Prostate gland (tissue), 2 donors: ENCODE measurements at regions of chr12 and their contacts with region 1.

Region 1: DNA sequence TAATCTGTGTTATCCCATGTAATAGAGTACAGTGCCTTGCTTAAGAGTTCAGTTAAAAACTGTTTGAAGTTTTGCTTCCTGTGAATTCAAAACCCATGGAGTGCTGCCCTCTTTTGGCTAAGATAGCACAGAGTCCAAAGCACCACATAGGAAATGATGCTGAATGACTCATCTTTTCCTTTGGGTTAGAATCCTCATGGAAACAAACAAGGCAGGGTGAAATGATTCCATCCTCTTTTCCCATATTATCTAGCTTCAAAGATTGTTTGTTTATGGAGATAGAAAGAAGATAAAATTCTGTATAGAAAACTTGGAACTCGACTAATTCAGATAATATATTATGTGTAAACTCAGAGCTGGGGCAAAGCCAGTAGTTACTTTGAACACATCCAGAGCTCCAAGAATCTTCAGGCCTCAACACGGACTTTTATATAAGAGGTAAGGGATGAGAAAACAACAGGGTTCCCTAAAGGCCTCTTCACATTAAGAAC is 87.4 kb downstream of the OTOGL start:
- DNase-seq: peak; percentile 65
- H3K4me3 ChIP-seq: no peak overlapping the region
- H3K27ac ChIP-seq: peak overlapping the region; percentile 65 to 71
- H3K4me1 ChIP-seq: no peaks in the 10 kb centered on the region
- H3K27me3 ChIP-seq: no peaks in the 10 kb centered on the region
- CTCF ChIP-seq: peak; percentile 26 to 80 (median 71)
- POLR2A ChIP-seq: no peak

Region 2: DNA sequence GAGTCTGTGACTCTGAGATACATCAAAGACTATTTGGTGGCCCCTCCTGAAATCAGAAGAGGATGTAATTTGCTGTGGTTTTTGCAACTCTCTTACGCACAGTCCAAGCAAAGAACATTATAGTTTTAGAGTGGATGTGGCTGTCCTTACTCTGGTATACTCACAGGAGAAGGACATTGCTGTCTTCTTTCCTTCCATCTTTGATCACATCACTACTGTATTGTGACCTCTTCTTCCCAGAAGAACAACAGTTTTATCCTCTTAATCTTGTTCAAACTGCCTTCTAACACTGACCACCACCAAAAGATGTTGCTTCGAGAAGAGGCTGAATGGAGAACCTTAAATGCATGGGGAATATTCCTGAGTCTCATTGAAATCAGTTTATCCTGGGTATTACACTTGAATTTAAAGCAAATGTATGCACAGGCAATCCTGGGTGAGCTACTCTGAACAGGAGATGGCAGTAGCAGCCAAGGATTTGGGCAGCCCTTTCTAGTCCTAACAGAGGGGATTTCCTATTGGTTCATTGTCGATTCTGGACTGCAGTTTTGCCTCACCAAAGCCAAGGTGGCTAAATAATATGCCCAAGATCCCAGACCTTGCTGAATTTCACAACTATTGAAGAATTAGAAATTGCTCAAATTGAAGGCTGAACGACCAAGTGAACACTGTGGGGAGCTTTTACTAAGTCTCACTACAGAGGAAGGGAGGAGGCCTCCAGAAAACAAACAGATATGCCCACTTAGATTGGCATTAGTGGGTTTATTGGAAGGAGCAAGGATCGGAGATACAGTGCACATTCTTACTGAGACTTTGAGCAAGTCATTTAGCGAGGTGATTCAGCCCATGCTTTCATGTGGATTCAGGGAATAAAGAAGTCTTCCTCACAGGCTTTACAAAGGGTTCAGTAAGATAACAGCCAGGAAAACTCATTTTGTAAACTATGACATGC is 778.8 kb before region 1 on chr12:
- intact Hi-C with region 1: loop called (anchors 5 kb)
- DNase-seq: peak; percentile 53
- H3K4me3 ChIP-seq: no peak overlapping the region
- H3K27ac ChIP-seq: peak overlapping the region in 1 of 2 donors; percentile 20
- H3K4me1 ChIP-seq: no peaks in the 10 kb centered on the region
- H3K27me3 ChIP-seq: no peaks in the 10 kb centered on the region
- CTCF ChIP-seq: peak; percentile 20 to 78 (median 63)
- POLR2A ChIP-seq: no peak

Region 3: DNA sequence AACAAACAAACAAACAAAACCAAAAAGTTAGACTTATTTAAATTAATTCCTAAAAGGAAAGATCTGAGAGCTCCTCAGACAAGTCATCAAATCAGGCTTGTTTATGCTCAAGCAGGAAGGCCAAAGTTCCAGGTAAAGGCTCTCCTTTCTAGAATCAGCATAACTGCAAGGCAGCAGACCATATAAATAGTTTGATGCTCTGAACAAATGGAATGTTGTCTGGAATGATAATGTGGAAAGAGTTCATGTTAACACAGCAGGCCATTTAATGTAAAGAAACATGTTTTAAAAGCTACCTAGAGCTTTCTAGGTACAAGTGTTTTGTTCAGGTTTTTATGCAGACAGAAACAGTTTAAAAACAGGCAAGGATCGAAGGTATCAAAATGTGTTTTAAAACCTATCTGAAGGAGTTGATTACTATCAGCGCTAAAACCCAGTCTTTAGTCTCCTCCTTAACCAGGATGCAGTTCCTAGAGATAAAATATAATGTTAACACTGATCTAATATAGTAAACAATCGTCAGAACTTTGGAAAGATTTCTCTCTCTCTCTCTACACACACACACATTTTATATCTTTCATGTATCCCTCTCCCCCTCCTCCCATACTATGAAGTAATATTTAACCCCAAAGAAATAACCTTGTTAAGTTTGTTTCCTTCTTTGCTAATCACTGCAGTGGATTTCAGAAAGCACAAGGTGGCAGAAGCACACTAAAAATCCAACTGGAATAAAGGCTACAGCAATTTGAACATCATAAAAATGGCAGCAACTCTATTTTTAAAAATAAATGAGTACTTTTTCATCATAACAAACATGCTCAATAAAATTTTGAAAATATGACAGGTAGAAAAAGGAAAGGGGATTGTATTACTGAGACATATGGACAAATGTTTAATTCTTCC is 631.5 kb before region 1 on chr12:
- intact Hi-C with region 1: loop called (anchors 5 kb)
- DNase-seq: no peak
- H3K4me3 ChIP-seq: no peak overlapping the region
- H3K27ac ChIP-seq: peak overlapping the region; percentile 82 to 83
- H3K4me1 ChIP-seq: peaks cover 3% of the 10 kb centered on the region
- H3K27me3 ChIP-seq: no peaks in the 10 kb centered on the region
- CTCF ChIP-seq: peak; percentile 40 to 94 (median 66)
- POLR2A ChIP-seq: no peak

Region 4: GRCh38 chr12:79690638-79691493 is 495.9 kb before region 1 on chr12 and contains the start of gene PAWR:
- intact Hi-C with region 1: loop called (anchors 10 kb)
- DNase-seq: peak; percentile 80
- H3K4me3 ChIP-seq: peak within 1 kb of the TSS; percentile 82 to 94
- H3K27ac ChIP-seq: peak within 1 kb of the TSS; percentile 94
- H3K4me1 ChIP-seq: no peaks in the 10 kb centered on the region
- H3K27me3 ChIP-seq: no peaks in the 10 kb centered on the region
- CTCF ChIP-seq: peak in 2 of 4 experiments; percentile 28 to 52
- POLR2A ChIP-seq: peak; percentile 18
- total RNA-seq, gene PAWR: 46.4 to 58.7 TPM

Region 5: GRCh38 chr12:79935021-79935623 is 251.7 kb before region 1 on chr12 and contains the start of gene PPP1R12A:
- intact Hi-C with region 1: loop called (anchors 2 kb)
- DNase-seq: peak; percentile 94
- H3K4me3 ChIP-seq: peak within 1 kb of the TSS; percentile 92 to 94
- H3K27ac ChIP-seq: peak within 1 kb of the TSS; percentile 94 to 96
- H3K4me1 ChIP-seq: no peaks in the 10 kb centered on the region
- H3K27me3 ChIP-seq: no peaks in the 10 kb centered on the region
- CTCF ChIP-seq: peak in 2 of 4 experiments; percentile 41 to 49
- POLR2A ChIP-seq: peak; percentile 96
- total RNA-seq, gene PPP1R12A: 68.7 to 86.9 TPM

Region 6: DNA sequence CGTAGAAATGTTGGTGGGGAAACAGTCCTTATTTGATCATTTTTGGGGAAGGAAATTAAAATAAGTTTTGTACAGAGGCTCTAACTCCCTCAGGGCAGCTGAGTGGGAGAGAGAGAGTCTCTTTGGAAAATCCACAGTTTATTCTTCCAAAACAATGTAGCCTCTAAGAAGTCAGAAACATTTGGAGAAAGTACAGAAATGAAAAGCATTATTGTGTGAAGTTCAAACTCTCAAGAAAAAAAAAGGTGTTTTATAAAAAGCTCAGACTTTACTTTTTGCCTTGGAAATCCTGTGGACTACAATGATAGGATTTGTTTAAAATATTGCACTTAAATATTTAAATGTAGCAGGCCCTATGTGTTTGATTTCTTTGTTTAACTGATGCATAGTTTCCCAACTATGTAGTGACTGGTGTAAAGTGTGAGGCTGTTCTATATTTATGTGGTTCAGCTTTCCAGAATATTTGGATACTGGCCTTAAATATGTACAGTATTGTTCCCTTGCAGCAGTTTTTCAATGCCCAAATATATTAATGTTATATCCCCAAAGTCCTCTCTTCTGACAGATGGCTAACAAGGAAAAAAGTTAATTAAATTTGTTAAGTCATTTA is 169.4 kb before region 1 on chr12:
- intact Hi-C with region 1: no loop called
- DNase-seq: no peak
- H3K4me3 ChIP-seq: no peak overlapping the region
- H3K27ac ChIP-seq: no peak overlapping the region
- H3K4me1 ChIP-seq: no peaks in the 10 kb centered on the region
- H3K27me3 ChIP-seq: no peaks in the 10 kb centered on the region
- CTCF ChIP-seq: no peak
- POLR2A ChIP-seq: no peak

Region 7: GRCh38 chr12:80053048-80053790 is 133.6 kb before region 1 on chr12:
- intact Hi-C with region 1: loop called (anchors 5 kb)
- DNase-seq: peak; percentile 56
- H3K4me3 ChIP-seq: no peak overlapping the region
- H3K27ac ChIP-seq: peak overlapping the region; percentile 43 to 53
- H3K4me1 ChIP-seq: no peaks in the 10 kb centered on the region
- H3K27me3 ChIP-seq: no peaks in the 10 kb centered on the region
- CTCF ChIP-seq: no peak
- POLR2A ChIP-seq: no peak